ENCODE measurements at regions of chr3 and their contacts with region 1.

Region 1: DNA sequence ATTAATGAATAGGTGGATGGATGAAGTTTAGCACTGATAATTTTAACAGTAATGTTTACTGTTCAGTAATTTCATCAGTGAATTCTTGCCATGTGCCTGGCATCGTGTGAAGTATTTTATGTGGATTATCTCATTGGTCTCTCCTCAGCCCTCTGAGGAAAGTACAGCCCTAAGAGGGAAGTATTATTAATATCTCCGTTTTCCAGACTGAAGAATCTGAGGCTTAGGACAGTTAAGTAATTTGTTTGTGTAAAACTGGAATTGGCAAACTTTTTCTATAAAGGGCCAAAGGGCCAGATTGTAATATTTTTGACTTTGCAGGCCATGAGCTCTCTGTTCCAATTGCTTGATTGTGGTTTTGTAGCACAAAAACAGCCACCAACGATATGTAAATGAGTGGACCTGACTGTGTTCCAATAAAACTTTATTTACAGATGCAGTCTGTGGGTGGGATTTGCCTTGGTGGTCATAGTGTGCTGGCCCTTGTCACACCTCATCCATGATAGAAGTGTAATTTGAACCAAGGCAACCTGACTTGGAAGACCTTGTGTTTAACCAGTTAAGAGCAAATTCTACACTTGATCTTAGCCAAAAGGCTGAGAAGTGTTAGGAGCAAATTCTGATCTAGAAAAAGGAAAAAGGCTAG is 255.3 kb downstream of the FEZF2 start:
- DNase-seq: no peak
- H3K4me3 ChIP-seq: no peak overlapping the region
- H3K27me3 ChIP-seq: no peaks in the 10 kb centered on the region
- CTCF ChIP-seq: no peak

Region 2: DNA sequence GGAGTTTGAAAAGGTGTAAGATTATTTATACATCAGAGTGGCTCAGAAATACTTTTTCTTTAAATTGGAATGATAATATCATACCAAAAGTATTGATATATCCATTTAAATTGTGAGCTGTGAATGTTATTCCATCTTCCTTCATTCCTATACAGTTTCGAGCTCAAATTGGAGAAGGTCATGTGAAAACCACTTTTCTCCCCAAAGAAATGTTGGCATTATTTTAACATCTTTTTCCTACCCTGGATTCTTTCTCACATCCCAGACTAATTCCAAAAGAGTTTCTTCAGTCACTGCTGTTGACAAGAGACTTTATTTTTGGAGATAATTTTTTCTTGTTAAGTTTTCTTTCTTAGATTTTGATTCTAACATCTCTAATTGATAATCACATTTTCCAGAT is 351.9 kb before region 1 on chr3:
- CTCF ChIA-PET with region 1: no interaction called
- POLR2A ChIA-PET with region 1: interaction called, 10 read pairs
- DNase-seq: no peak
- H3K4me3 ChIP-seq: no peak overlapping the region
- H3K27me3 ChIP-seq: no peaks in the 10 kb centered on the region
- CTCF ChIP-seq: no peak

Region 3: DNA sequence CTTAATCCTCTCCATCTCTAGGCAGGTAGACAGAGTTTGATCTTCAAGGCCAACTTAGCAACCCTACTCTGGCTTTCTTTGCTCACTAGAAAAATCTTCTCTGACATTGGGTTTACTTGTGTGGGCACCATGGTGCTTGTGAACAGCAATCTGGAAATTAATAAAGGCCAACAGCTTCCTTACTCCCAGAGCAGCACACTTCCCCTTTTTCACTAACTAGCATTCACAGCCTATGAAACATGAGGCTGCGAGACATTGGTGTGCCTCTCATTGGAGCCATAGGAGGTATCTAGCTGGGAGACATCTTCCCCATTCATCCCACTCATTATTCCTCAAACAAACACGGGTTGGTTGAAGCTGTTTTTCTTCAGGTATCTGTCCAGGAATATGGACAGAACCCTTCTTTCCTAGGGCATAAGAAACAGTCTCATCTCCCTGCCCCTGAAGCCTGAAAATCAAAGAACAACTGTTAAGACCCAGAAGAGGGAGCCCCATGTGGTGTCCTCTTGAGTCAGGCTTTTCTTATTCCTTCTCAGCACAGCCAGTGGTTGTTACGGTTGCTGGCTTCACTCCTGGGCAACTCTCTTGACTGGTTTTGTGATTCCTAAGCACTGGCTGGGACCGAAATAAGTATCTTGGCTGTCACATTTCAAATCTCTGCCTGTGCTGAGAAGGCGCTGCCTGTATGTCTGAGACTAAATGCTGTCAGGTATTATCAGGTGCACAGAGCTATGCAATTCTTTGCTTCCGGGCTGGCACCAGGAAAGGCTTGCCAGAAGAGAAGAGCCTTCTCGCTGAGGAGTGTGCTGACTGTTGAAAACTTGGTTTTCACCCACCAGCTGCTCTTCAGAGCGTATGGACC is 60.9 kb after region 1 on chr3:
- CTCF ChIA-PET with region 1: no interaction called
- POLR2A ChIA-PET with region 1: no interaction called
- DNase-seq: no peak
- H3K4me3 ChIP-seq: no peak overlapping the region
- H3K27me3 ChIP-seq: no peaks in the 10 kb centered on the region
- CTCF ChIP-seq: no peak

Region 4: GRCh38 chr3:63405882-63406281 is 1287.9 kb after region 1 on chr3:
- CTCF ChIA-PET with region 1: no interaction called
- POLR2A ChIA-PET with region 1: no interaction called
- DNase-seq: no peak
- H3K4me3 ChIP-seq: no peak overlapping the region
- H3K27me3 ChIP-seq: no peaks in the 10 kb centered on the region
- CTCF ChIP-seq: no peak

Measured in BJ (cell line).